GM18951 (cell line): ENCODE measurements at regions of chr11 and their contacts with region 1.

Region 1: DNA sequence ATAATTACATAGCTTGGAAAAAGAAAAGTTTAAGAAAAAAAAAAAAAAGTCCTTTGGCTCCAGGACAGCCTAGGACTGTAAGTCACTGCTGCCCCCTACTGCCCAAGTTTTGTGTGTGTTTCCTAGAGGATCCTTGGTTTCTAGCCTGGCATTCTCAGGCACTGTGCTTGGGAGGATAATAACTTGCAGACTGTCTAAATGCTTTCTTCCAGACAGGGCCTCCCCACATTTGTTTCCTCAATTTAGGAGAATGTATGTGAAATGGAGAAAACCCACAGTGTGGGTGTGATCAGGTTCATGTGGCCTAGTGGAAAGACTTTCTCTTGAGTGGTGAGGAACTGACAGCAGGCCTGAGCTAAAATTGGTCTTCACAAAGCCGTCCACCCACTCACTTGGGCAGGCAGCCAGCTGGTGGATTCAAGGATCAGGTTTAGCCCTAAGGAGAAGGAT is 191.0 kb downstream of the NAV2 start:
- POLR2A ChIP-seq: no peak

Region 2: GRCh38 chr11:19311308-19312030 is 592.2 kb before region 1 on chr11:
- in situ Hi-C with region 1: loop called (anchors 25 kb)
- POLR2A ChIP-seq: no peak

Region 3: GRCh38 chr11:19566583-19567379 is 336.9 kb before region 1 on chr11:
- in situ Hi-C with region 1: loop called (anchors 5 kb)
- POLR2A ChIP-seq: no peak